ENCODE measurements at regions of chr5 and their contacts with region 1.

Region 1: GRCh38 chr5:59380350-59380951 is 513.1 kb downstream of the PDE4D start:
- DNase-seq: peak; percentile 12 to 68
- H3K4me3 ChIP-seq: no peak overlapping the region
- H3K27ac ChIP-seq: no peak overlapping the region
- H3K4me1 ChIP-seq: no peaks in the 10 kb centered on the region
- H3K27me3 ChIP-seq: no peaks in the 10 kb centered on the region
- CTCF ChIP-seq: peak; percentile 67

Region 2: DNA sequence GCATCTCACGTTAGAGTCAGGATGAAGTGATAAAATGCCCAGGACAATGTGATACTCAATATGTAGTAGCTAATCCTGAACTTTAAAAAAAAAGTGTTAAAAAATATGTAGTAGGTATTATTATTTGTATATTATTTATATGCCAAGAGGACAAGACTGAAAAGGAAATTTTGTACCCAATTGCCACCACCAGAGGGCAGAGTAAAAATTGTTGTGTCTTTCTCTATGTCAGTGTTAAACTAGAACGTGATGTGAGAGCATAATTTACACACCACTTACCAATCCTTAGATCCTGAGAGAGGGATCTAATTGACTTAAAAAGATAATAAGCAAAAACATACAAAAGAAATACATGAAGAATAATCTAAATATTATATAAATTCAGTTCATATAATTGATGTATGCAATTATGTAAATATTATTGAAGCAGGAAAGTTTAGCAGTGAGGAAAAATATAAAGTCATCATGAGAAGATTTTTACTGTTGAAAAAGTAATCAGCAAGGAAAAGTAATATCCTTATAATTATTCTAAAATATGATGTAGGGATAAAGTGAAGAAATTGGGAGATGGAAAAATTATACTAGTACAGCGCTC is 508.7 kb before region 1 on chr5:
- CTCF ChIA-PET with region 1: no interaction called
- POLR2A ChIA-PET with region 1: no interaction called
- intact Hi-C with region 1: loop called (anchors 5 kb)
- DNase-seq: peak in 1 of 2 experiments; percentile 42
- H3K4me3 ChIP-seq: no peak overlapping the region
- H3K27ac ChIP-seq: no peak overlapping the region
- H3K4me1 ChIP-seq: no peaks in the 10 kb centered on the region
- H3K27me3 ChIP-seq: no peaks in the 10 kb centered on the region
- CTCF ChIP-seq: peak; percentile 75

Region 3: GRCh38 chr5:59143926-59144333 is 236.5 kb before region 1 on chr5:
- CTCF ChIA-PET with region 1: no interaction called
- POLR2A ChIA-PET with region 1: no interaction called
- intact Hi-C with region 1: no loop called
- DNase-seq: no peak
- H3K4me3 ChIP-seq: no peak overlapping the region
- H3K27ac ChIP-seq: no peak overlapping the region
- H3K4me1 ChIP-seq: no peaks in the 10 kb centered on the region
- H3K27me3 ChIP-seq: no peaks in the 10 kb centered on the region
- CTCF ChIP-seq: no peak

Region 4: GRCh38 chr5:59188419-59189225 is 191.8 kb before region 1 on chr5:
- CTCF ChIA-PET with region 1: interaction called, 18 read pairs
- POLR2A ChIA-PET with region 1: no interaction called
- intact Hi-C with region 1: loop called (anchors 1 kb)
- DNase-seq: peak in 1 of 2 experiments; percentile 35
- H3K4me3 ChIP-seq: no peak overlapping the region; the same call in 1 of the 2 replicates
- H3K27ac ChIP-seq: no peak overlapping the region
- H3K4me1 ChIP-seq: peaks cover 4% of the 10 kb centered on the region
- H3K27me3 ChIP-seq: no peaks in the 10 kb centered on the region
- CTCF ChIP-seq: peak; percentile 89